Activated CD4-positive, alpha-beta T cell treated with anti-CD3 and anti-CD28 coated beads for 36 hours (primary cell): ENCODE measurements at regions of chr1 and their contacts with region 1.

Region 1: GRCh38 chr1:40951943-40952743 is 27.4 kb upstream of the CTPS1 start:
- DNase-seq: peak; percentile 75
- ATAC-seq: peak; percentile 72
- H3K4me3 Mint-ChIP-seq: no peak overlapping the region
- H3K27ac Mint-ChIP-seq: no peak overlapping the region
- H3K4me1 Mint-ChIP-seq: no peaks in the 10 kb centered on the region
- H3K27me3 Mint-ChIP-seq: peaks cover 25% of the 10 kb centered on the region

Region 2: GRCh38 chr1:40612345-40612831 is 339.8 kb before region 1 on chr1:
- CTCF ChIA-PET with region 1: interaction called, 5 read pairs
- POLR2A ChIA-PET with region 1: no interaction called
- intact Hi-C with region 1: loop called (anchors 1 kb)
- DNase-seq: peak; percentile 84
- ATAC-seq: peak; percentile 97
- H3K4me3 Mint-ChIP-seq: no peak overlapping the region
- H3K27ac Mint-ChIP-seq: no peak overlapping the region
- H3K4me1 Mint-ChIP-seq: no peaks in the 10 kb centered on the region
- H3K27me3 Mint-ChIP-seq: no peaks in the 10 kb centered on the region

Region 3: GRCh38 chr1:40783001-40783905 is 168.9 kb before region 1 on chr1 and contains the start of gene KCNQ4:
- CTCF ChIA-PET with region 1: interaction called, 4 read pairs
- POLR2A ChIA-PET with region 1: no interaction called
- intact Hi-C with region 1: loop called in 1 of 2 experiments (anchors 10 kb)
- DNase-seq: peak; percentile 48
- ATAC-seq: peak; percentile 56
- H3K4me3 Mint-ChIP-seq: peak within 1 kb of the TSS; percentile 64
- H3K27ac Mint-ChIP-seq: no peak within 1 kb of the TSS
- H3K4me1 Mint-ChIP-seq: peaks cover 6% of the 10 kb centered on the region
- H3K27me3 Mint-ChIP-seq: peaks cover 26% of the 10 kb centered on the region
- total RNA-seq, gene KCNQ4: 0.43 to 0.58 TPM

Region 4: DNA sequence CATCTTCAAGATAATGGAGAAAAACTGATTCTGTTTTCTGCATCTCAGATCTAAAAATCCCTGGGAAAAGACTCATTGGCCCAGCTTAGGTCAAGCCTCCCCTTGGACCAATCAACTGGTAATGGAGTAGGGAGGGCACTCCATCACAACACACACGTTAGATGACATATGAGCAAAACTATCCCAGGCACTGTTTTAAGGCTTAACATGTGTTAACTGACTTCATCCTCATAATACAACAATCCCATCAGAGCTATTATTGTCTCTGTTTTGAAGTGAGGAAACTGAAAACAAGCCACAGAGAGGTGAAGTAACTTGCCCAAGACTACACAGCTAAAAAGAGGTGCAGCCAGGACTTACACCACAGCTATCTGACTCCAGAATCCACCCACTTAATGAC is 75.3 kb before region 1 on chr1:
- CTCF ChIA-PET with region 1: interaction called, 10 read pairs
- POLR2A ChIA-PET with region 1: no interaction called
- intact Hi-C with region 1: no loop called
- DNase-seq: no peak
- ATAC-seq: no peak
- H3K4me3 Mint-ChIP-seq: no peak overlapping the region
- H3K27ac Mint-ChIP-seq: no peak overlapping the region
- H3K4me1 Mint-ChIP-seq: peaks cover 28% of the 10 kb centered on the region
- H3K27me3 Mint-ChIP-seq: no peaks in the 10 kb centered on the region

Region 5: DNA sequence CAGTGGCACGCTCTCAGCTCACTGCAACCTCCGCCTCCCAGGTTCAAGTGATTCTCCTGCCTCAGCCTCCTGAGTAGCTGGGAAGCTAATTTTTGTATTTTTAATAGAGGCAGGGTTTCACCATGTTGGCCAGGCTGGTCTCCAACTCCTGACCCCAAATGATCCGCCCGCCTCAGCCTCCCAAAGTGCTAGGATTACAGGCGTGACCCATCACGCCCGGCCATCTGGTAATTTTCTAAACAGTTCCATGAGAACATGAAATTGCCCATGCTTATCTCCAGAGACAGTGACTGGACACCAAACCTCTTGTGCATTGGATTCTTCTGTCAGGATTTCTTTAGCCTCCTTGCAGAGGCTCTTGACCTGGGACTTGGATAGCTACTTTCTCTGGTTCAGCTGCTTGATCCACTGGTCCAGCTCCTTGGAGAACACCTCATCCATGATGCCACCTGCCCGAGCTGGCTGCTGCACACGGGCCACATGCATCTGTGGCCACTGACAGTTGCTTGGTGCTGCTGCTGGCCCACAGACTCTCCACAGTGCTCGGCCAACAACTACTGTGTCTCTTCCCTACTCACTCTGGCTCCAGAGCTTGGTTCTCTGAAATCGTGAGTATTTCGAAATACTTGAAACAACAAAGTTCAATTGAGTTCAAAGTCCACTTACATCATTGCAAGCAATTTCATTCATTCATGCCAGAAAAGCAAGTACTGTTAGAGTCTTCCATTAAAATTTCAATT is 12.7 kb before region 1 on chr1:
- CTCF ChIA-PET with region 1: interaction called, 140 read pairs
- POLR2A ChIA-PET with region 1: no interaction called
- intact Hi-C with region 1: no loop called
- DNase-seq: no peak
- ATAC-seq: no peak
- H3K4me3 Mint-ChIP-seq: no peak overlapping the region
- H3K27ac Mint-ChIP-seq: no peak overlapping the region
- H3K4me1 Mint-ChIP-seq: no peaks in the 10 kb centered on the region
- H3K27me3 Mint-ChIP-seq: no peaks in the 10 kb centered on the region